A673 (cell line): ENCODE measurements at regions of chr2 and their contacts with region 1.

Region 1: GRCh38 chr2:25606892-25607291 is 66.5 kb downstream of the DTNB start:
- DNase-seq: peak; percentile 44
- H3K4me3 ChIP-seq: no peak overlapping the region
- H3K27ac ChIP-seq: no peak overlapping the region
- H3K4me1 ChIP-seq: no peaks in the 10 kb centered on the region
- H3K27me3 ChIP-seq: no peaks in the 10 kb centered on the region
- CTCF ChIP-seq: peak; percentile 66

Region 2: GRCh38 chr2:25274868-25275574 is 331.9 kb before region 1 on chr2:
- CTCF ChIA-PET with region 1: no interaction called
- POLR2A ChIA-PET with region 1: no interaction called
- intact Hi-C with region 1: no loop called
- DNase-seq: no peak
- H3K4me3 ChIP-seq: no peak overlapping the region
- H3K27ac ChIP-seq: peak overlapping the region; percentile 53
- H3K4me1 ChIP-seq: peaks cover 22% of the 10 kb centered on the region
- H3K27me3 ChIP-seq: no peaks in the 10 kb centered on the region
- CTCF ChIP-seq: no peak

Region 3: DNA sequence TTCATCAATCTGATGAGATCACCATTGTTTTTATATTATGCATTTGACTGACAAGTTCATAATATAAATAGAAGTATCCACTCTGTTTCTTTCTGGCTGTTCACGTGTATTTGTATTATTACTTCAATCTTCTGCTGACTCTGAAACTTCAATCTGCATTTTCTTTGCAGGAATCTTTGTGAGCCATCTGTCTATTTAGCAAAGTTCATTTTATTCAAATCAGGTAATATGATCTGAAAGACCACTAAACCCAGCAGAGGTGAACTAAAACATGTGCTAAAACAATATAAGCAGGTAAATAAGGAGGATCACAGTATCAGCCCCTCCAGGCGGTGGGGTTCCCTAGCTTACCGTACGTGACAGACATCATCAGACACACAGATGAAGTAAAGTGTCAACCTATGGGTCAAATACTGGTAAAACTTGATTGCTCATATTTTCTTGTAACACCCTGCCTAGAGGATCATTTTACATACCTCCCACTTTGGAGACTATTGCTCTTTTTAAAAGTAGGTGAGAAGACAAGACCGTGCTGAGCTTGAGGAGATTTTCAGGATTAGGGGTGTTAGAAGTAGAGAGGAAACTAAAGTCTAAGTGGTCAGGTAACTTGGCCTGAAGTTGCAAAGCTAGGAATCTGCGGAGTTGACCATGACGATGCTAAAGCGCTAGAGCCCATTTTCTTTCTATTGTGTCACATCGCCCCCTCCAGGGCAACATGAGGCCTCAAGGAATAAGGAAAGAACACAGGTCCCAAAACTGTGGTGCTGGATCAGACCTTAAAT is 57.5 kb after region 1 on chr2:
- CTCF ChIA-PET with region 1: interaction called, 12 read pairs
- POLR2A ChIA-PET with region 1: no interaction called
- intact Hi-C with region 1: loop called (anchors 2 kb)
- DNase-seq: peak; percentile 83
- H3K4me3 ChIP-seq: no peak overlapping the region
- H3K27ac ChIP-seq: no peak overlapping the region
- H3K4me1 ChIP-seq: peaks cover 15% of the 10 kb centered on the region
- H3K27me3 ChIP-seq: no peaks in the 10 kb centered on the region
- CTCF ChIP-seq: peak; percentile 86

Region 4: DNA sequence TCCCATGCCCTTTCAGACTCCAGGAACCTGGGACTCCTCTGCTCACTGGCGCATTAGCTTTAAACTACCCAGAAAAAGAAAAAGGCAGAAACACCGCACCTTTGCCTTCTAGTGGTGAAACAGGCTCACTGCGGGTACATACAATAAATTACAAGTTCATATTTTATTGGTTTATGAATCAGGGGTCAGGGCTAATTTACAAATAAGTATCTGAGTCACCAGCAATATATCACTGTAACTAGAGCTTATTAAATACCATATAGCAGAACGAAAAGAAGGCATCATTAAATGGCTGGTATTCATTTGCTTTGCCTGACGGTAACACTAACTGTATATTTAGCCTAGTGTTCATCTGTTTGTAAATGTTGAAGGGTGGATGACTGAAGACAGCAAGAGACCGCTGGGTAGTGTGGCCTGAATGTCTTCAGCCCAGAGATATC is 93.3 kb after region 1 on chr2:
- CTCF ChIA-PET with region 1: interaction called, 13 read pairs
- POLR2A ChIA-PET with region 1: no interaction called
- intact Hi-C with region 1: no loop called
- DNase-seq: peak; percentile 46
- H3K4me3 ChIP-seq: no peak overlapping the region
- H3K27ac ChIP-seq: no peak overlapping the region
- H3K4me1 ChIP-seq: peaks cover 3% of the 10 kb centered on the region
- H3K27me3 ChIP-seq: no peaks in the 10 kb centered on the region
- CTCF ChIP-seq: peak; percentile 74